ENCODE measurements at regions of chr6 and their contacts with region 1.

Region 1: GRCh38 chr6:110682460-110682853 is 132.8 kb downstream of the CDK19 start:
- DNase-seq: no peak
- ATAC-seq: peak; percentile 87
- H3K4me3 ChIP-seq: no peak overlapping the region
- H3K27ac ChIP-seq: no peak overlapping the region
- H3K4me1 ChIP-seq: no peaks in the 10 kb centered on the region
- H3K27me3 ChIP-seq: no peaks in the 10 kb centered on the region

Region 2: DNA sequence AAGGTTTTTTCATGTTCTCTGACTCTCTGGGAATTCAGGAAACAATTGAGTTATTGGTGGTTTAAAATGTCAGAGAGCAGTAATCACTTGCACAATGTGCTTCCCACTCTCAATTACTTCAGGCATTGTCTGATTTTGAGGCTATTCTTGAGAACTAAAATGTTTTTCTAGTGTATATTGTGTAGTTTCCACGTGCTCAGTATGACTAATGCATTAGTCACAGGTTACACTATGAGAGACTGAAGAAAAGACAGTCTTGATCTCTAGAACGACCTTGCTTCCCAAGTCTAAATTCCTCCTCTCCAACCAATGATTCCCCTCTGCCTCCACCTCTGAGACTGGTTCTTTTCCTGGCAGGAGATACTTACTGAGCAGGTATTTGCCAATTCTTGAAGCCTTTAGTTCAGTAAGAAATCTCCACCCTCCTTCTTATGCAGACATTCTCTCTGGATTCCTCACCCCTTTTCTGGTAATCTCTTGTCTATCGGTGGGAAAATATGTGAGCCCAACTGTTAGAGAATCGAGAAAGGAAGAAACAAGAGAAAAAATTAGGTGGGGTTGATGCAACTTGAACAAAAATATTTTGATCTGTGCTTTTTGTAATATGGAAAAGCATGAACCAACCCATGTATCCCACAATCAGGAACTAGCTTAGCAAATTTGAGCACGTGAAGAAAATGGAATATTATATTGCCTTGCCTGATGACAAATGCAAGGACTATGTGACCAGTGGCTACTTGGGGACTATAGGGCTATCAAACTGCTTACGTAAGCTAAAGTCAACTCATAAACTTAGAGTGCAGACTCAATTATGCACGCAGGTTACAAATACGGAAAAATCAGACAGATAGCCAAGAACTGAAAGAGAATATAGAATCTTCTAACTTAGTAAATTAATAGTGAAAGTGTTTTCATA is 145.0 kb before region 1 on chr6:
- intact Hi-C with region 1: loop called in 1 of 2 experiments (anchors 10 kb)
- DNase-seq: no peak
- ATAC-seq: peak; percentile 72
- H3K4me3 ChIP-seq: no peak overlapping the region
- H3K27ac ChIP-seq: no peak overlapping the region
- H3K4me1 ChIP-seq: no peaks in the 10 kb centered on the region
- H3K27me3 ChIP-seq: no peaks in the 10 kb centered on the region

Region 3: GRCh38 chr6:110815217-110816109 is 133.0 kb after region 1 on chr6 and contains the start of gene CDK19:
- intact Hi-C with region 1: loop called in 1 of 2 experiments (anchors 5 kb)
- DNase-seq: peak; percentile 99
- ATAC-seq: peak; percentile 97
- H3K4me3 ChIP-seq: peak within 1 kb of the TSS; percentile 71 to 80
- H3K27ac ChIP-seq: peak within 1 kb of the TSS; percentile 58 to 91
- H3K4me1 ChIP-seq: no peaks in the 10 kb centered on the region
- H3K27me3 ChIP-seq: no peaks in the 10 kb centered on the region
- total RNA-seq, gene CDK19: 19.5 to 22.4 TPM

Region 4: GRCh38 chr6:110849781-110850180 is 167.3 kb after region 1 on chr6:
- intact Hi-C with region 1: no loop called
- DNase-seq: no peak
- ATAC-seq: no peak
- H3K4me3 ChIP-seq: no peak overlapping the region
- H3K27ac ChIP-seq: no peak overlapping the region
- H3K4me1 ChIP-seq: no peaks in the 10 kb centered on the region
- H3K27me3 ChIP-seq: no peaks in the 10 kb centered on the region

Region 5: GRCh38 chr6:110873981-110874879 is 191.8 kb after region 1 on chr6 and contains the start of gene AMD1:
- intact Hi-C with region 1: loop called in 1 of 2 experiments (anchors 10 kb)
- DNase-seq: peak; percentile 98
- ATAC-seq: peak; percentile 94
- H3K4me3 ChIP-seq: peak within 1 kb of the TSS; percentile 72 to 94
- H3K27ac ChIP-seq: peak within 1 kb of the TSS; percentile 32 to 97
- H3K4me1 ChIP-seq: no peaks in the 10 kb centered on the region
- H3K27me3 ChIP-seq: no peaks in the 10 kb centered on the region
- total RNA-seq, gene AMD1: 37.8 to 55.1 TPM

Region 6: GRCh38 chr6:110949679-110950285 is 267.3 kb after region 1 on chr6:
- intact Hi-C with region 1: loop called (anchors 1 to 2 kb)
- DNase-seq: no peak
- ATAC-seq: no peak
- H3K4me3 ChIP-seq: no peak overlapping the region
- H3K27ac ChIP-seq: no peak overlapping the region
- H3K4me1 ChIP-seq: no peaks in the 10 kb centered on the region
- H3K27me3 ChIP-seq: no peaks in the 10 kb centered on the region

Region 7: GRCh38 chr6:110958329-110959192 is 276.1 kb after region 1 on chr6 and contains the start of gene GTF3C6:
- intact Hi-C with region 1: loop called in 1 of 2 experiments (anchors 2 kb)
- DNase-seq: peak; percentile 96 to 97
- ATAC-seq: peak; percentile 99
- H3K4me3 ChIP-seq: peak within 1 kb of the TSS; percentile 51 to 73
- H3K27ac ChIP-seq: peak within 1 kb of the TSS; percentile 36 to 76
- H3K4me1 ChIP-seq: no peaks in the 10 kb centered on the region
- H3K27me3 ChIP-seq: no peaks in the 10 kb centered on the region
- total RNA-seq, gene GTF3C6: 43.0 to 46.6 TPM

Region 8: GRCh38 chr6:111013144-111013915 is 330.9 kb after region 1 on chr6:
- intact Hi-C with region 1: no loop called
- DNase-seq: no peak
- ATAC-seq: no peak
- H3K4me3 ChIP-seq: no peak overlapping the region
- H3K27ac ChIP-seq: no peak overlapping the region
- H3K4me1 ChIP-seq: no peaks in the 10 kb centered on the region
- H3K27me3 ChIP-seq: no peaks in the 10 kb centered on the region